Calu3 (cell line): ENCODE measurements at regions of chr7 and their contacts with region 1.

Region 1: GRCh38 chr7:87404674-87405073 is 59.2 kb downstream of the CROT start:
- DNase-seq: no peak
- H3K4me3 Mint-ChIP-seq: no peak overlapping the region
- H3K27ac Mint-ChIP-seq: no peak overlapping the region
- H3K4me1 Mint-ChIP-seq: no peaks in the 10 kb centered on the region
- H3K27me3 Mint-ChIP-seq: no peaks in the 10 kb centered on the region
- CTCF ChIP-seq: no peak

Region 2: GRCh38 chr7:87046457-87046856 is 358.2 kb before region 1 on chr7:
- CTCF ChIA-PET with region 1: no interaction called
- intact Hi-C with region 1: no loop called
- DNase-seq: no peak
- H3K4me3 Mint-ChIP-seq: no peak overlapping the region
- H3K27ac Mint-ChIP-seq: no peak overlapping the region
- H3K4me1 Mint-ChIP-seq: no peaks in the 10 kb centered on the region
- H3K27me3 Mint-ChIP-seq: peaks cover 12% of the 10 kb centered on the region
- CTCF ChIP-seq: no peak

Region 3: GRCh38 chr7:87345166-87345927 is 59.3 kb before region 1 on chr7 and contains the start of gene CROT:
- CTCF ChIA-PET with region 1: no interaction called
- intact Hi-C with region 1: loop called (anchors 5 kb)
- DNase-seq: peak; percentile 89
- H3K4me3 Mint-ChIP-seq: peak within 1 kb of the TSS; percentile 92
- H3K27ac Mint-ChIP-seq: peak within 1 kb of the TSS; percentile 39
- H3K4me1 Mint-ChIP-seq: peaks cover 8% of the 10 kb centered on the region
- H3K27me3 Mint-ChIP-seq: no peaks in the 10 kb centered on the region
- CTCF ChIP-seq: no peak
- total RNA-seq, gene CROT: 7.3 and 9.1 TPM in 2 replicates